Aorta (tissue), 5 donors: ENCODE measurements at regions of chr3 and their contacts with region 1.

Region 1: DNA sequence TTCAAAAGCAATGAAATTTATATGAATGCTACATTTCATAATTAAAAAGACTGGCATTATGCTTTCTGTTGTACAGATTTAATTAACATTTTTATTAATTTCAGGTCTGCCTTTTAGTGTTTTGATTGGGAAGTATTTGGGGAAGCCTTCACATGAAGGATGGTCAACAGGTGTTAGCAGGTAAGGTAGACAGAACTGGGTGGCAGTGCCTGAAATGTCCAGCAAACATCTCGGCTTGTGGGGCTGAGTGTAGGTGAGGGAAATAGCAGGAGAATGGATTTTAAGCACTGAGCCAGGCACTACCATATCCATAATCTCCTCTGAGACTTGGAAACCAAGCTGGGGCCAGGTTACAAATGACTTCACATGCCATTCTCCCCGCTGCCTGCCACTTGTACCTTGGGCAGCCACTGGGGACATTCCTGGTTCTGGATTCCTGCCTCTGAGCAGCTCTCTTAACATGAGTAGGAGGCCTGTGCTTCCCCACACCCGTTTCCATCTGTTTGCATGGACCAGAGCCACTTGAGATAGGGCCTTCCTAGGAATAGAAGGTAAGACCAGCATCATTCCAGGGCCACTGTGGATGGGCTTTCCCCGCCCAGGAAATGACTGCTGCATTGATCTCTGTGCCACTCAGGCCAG is 125.9 kb upstream of the HES1 start:
- DNase-seq: no peak
- ATAC-seq: no peak
- H3K4me3 ChIP-seq: no peak overlapping the region
- H3K27ac ChIP-seq: no peak overlapping the region
- H3K4me1 ChIP-seq: no peaks in the 10 kb centered on the region
- H3K27me3 ChIP-seq: no peaks in the 10 kb centered on the region

Region 2: GRCh38 chr3:194070634-194071409 is 60.8 kb after region 1 on chr3:
- intact Hi-C with region 1: loop called in 1 of 2 experiments (anchors 5 kb)
- DNase-seq: peak; percentile 91 to 96
- ATAC-seq: peak; percentile 90
- H3K4me3 ChIP-seq: peak overlapping the region in 1 of 2 donors; percentile 27
- H3K27ac ChIP-seq: peak overlapping the region in 1 of 2 donors; percentile 22
- H3K4me1 ChIP-seq: no peaks in the 10 kb centered on the region
- H3K27me3 ChIP-seq: no peaks in the 10 kb centered on the region